K562 (cell line): ENCODE measurements at regions of chr9 and their contacts with region 1.

Region 1: GRCh38 chr9:137672907-137673791 is 54.3 kb downstream of the EHMT1 start:
- DNase-seq: peak; percentile 63 to 74 (median 68)
- ATAC-seq: peak; percentile 14; the same call in 2 of the 3 replicates
- H3K4me3 ChIP-seq: no peak overlapping the region
- H3K27ac ChIP-seq: no peak overlapping the region
- H3K4me1 ChIP-seq: peaks cover 22 to 58% of the 10 kb centered on the region in 2 experiments; a peak in 4 of 5 replicates
- H3K27me3 ChIP-seq: no peaks in the 10 kb centered on the region
- CTCF ChIP-seq: peak; percentile 78 to 90 (median 85)
- EP300 ChIP-seq: no peak
- POLR2A ChIP-seq: no peak
- RAD21 ChIP-seq: peak; percentile 71 to 84

Region 2: DNA sequence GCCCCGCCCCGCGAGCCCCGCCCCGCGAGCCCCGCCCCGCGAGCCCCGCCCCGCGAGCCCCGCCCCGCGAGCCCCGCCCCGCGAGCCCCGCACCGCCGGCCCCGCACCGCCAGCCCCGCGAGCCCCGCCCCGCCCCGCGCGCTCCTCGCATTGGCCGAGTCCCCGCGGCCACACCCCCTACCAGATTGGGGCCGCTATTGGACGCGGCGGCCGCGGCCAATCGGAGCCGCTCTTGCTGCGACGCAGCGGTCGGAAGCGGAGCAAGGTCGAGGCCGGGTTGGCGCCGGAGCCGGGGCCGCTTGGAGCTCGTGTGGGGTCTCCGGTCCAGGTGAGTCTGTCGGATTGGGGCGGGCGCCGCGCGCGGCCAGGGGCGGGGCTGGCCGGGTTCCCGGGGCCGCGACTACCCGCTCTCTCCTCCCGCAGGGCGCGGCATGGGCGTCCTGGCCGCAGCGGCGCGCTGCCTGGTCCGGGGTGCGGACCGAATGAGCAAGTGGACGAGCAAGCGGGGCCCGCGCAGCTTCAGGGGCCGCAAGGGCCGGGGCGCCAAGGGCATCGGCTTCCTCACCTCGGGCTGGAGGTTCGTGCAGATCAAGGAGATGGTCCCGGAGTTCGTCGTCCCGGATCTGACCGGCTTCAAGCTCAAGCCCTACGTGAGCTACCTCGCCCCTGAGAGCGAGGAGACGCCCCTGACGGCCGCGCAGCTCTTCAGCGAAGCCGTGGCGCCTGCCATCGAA is 121.3 kb before region 1 on chr9 and contains the start of gene MRPL41:
- CTCF ChIA-PET with region 1: no interaction called
- POLR2A ChIA-PET with region 1: no interaction called
- in situ Hi-C with region 1: no loop called
- intact Hi-C with region 1: loop called (anchors 10 kb)
- DNase-seq: peak; percentile 94 to 98 (median 94)
- ATAC-seq: peak; percentile 91
- H3K4me3 ChIP-seq: peak within 1 kb of the TSS; percentile 96
- H3K27ac ChIP-seq: peak within 1 kb of the TSS; percentile 97
- H3K4me1 ChIP-seq: peaks cover 2 to 37% of the 10 kb centered on the region in 2 experiments; a peak in 4 of 5 replicates
- H3K27me3 ChIP-seq: no peaks in the 10 kb centered on the region
- CTCF ChIP-seq: no peak
- EP300 ChIP-seq: peak; percentile 8; the same call in 1 of the 2 replicates
- POLR2A ChIP-seq: peak; percentile 81
- RAD21 ChIP-seq: no peak
- polyA plus RNA-seq, gene MRPL41: 2.6 to 4.1 TPM

Region 3: DNA sequence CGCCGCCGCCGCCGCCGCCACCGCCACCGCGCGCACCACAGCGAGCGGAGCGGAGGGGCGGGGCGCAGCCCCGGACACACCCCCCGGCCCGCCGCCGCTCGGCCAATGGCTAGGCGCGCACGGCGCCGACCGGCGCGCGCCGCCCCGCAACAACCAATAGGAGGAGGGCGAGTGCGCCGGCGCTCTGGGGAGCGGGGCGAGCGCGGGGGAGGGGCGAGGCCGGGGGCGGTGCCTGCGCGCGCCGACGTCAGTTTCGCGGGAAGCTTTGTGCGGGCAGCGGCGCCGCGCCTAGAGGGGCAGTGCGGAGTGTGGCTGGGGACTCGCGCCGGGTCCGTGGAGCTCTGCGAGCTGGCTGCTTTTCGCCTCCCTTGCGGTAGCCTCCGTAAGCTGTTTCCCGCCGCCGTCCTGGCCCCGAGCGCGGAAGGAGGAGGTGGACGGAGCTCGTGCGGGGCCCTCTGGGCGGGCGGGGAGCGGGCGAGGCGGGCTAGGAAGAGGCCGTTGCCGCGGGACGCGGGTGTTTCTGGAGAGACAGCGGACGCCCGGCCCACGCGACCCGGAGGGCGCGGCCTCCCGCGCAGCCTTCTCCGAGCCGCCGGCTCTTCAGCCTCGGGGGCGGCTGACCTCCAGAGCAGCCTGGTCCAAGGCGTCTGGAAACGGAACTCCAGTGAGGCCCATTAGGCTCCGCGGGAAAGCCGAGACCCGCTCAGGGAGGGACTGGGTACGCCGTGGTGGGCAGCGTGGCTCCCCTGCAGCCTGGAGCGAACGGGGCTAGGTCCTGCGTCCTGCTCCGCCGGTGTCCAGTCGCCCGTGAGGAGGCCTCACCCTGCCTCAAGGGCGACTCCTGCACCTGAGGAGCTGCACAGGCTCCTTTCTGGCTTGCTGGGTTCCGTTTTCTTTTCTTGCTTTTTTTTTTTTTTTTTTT is 82.4 kb before region 1 on chr9 and contains the start of gene ZMYND19:
- CTCF ChIA-PET with region 1: no interaction called
- POLR2A ChIA-PET with region 1: no interaction called
- in situ Hi-C with region 1: no loop called
- intact Hi-C with region 1: loop called (anchors 10 kb)
- DNase-seq: peak; percentile 92 to 100 (median 100)
- ATAC-seq: peak; percentile 96
- H3K4me3 ChIP-seq: peak within 1 kb of the TSS; percentile 92
- H3K27ac ChIP-seq: peak within 1 kb of the TSS; percentile 76
- H3K4me1 ChIP-seq: peaks cover 27 to 54% of the 10 kb centered on the region in 2 experiments; a peak in 4 of 5 replicates
- H3K27me3 ChIP-seq: no peaks in the 10 kb centered on the region
- CTCF ChIP-seq: peak in 2 of 3 experiments; percentile 15 to 31; a peak in 4 of 6 replicates
- EP300 ChIP-seq: no peak
- POLR2A ChIP-seq: peak; percentile 63
- RAD21 ChIP-seq: no peak
- polyA plus RNA-seq, gene ZMYND19: 1.0 to 2.4 TPM

Region 4: GRCh38 chr9:137694967-137695879 is 22.1 kb after region 1 on chr9:
- CTCF ChIA-PET with region 1: interaction called, 7 read pairs
- POLR2A ChIA-PET with region 1: interaction called, 8 read pairs
- in situ Hi-C with region 1: no loop called
- intact Hi-C with region 1: loop called (anchors 1 kb)
- DNase-seq: peak; percentile 68 to 77 (median 76)
- ATAC-seq: peak; percentile 99
- H3K4me3 ChIP-seq: no peak overlapping the region
- H3K27ac ChIP-seq: no peak overlapping the region
- H3K4me1 ChIP-seq: peaks cover 0 to 26% of the 10 kb centered on the region in 2 experiments; a peak in 3 of 5 replicates
- H3K27me3 ChIP-seq: no peaks in the 10 kb centered on the region
- CTCF ChIP-seq: peak; percentile 89 to 92 (median 90)
- EP300 ChIP-seq: no peak
- POLR2A ChIP-seq: no peak
- RAD21 ChIP-seq: peak in 1 of 2 experiments; percentile 69; a peak in 2 of 4 replicates

Region 5: DNA sequence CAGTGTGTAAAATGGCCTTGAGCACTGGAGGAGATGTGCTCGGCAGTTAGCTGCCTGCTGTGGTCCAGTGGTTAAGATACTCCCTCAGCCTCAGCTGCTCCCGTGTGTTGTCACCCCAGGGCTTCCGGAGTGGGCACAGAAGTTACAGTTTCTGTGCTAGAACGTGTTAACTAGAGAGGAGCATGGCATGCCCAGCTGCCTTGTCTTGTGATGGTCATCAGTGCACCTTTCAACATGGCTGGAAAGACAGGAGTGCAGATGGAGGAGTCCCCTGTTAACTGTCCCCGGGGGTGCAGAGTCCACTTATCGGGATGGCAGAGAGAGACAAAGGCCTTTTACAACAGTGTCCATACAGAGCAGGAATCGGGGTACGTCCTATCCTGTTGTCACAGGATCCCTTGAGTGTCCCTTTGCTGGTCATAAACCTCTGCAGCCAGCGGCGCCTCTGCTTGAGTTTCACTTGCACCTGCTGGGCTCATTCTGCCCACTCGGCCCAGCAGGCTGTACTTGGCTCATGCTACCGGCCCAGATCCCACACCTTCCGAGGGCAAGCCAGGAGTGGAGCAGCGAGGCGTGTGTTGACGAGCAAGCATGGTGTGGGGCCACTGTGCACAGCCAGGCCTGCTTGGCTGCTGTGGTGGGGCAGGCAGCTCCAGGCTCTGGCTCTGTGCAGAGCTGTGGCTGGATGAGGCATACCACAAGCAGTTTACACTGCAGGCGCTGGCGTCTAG is 58.2 kb after region 1 on chr9:
- CTCF ChIA-PET with region 1: no interaction called
- POLR2A ChIA-PET with region 1: no interaction called
- in situ Hi-C with region 1: no loop called
- intact Hi-C with region 1: no loop called
- DNase-seq: no peak
- ATAC-seq: no peak
- H3K4me3 ChIP-seq: no peak overlapping the region
- H3K27ac ChIP-seq: no peak overlapping the region
- H3K4me1 ChIP-seq: peaks cover 0 to 6% of the 10 kb centered on the region in 2 experiments; a peak in 1 of 5 replicates
- H3K27me3 ChIP-seq: no peaks in the 10 kb centered on the region
- CTCF ChIP-seq: no peak
- EP300 ChIP-seq: no peak
- POLR2A ChIP-seq: no peak
- RAD21 ChIP-seq: no peak

Region 6: DNA sequence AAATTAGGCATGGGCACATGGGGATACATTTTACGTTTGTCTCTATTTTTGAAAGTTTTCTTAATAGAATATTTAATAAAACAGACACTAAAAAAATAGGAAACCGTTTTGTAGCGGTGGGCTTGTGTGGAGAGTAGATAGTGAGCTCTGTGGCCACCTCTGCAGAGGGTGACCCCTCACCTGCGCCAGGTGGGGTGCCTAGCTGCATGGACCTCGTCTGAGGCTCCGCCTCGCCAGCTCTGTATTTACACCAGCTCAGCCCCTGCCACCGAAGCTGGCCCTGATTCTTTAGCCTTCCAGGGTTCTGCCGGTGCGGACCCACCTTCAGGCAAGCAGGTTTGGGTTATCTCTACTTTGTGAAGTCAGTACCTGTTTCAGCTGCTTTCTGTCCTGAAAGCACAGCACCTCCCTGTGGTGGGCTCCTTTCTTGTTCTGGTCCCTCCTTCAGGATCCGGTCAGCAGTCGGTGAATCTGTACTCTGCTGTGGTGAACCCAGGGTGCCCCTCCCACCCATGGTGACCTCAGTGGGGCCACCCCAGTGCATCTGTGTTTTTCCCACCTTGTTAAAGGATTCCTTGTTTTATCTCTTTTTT is 99.2 kb after region 1 on chr9:
- CTCF ChIA-PET with region 1: interaction called, 4 read pairs
- POLR2A ChIA-PET with region 1: interaction called, 3 read pairs
- in situ Hi-C with region 1: no loop called
- intact Hi-C with region 1: loop called (anchors 5 kb)
- DNase-seq: peak in 3 of 4 experiments; percentile 11 to 33 (median 28)
- ATAC-seq: peak; percentile 72
- H3K4me3 ChIP-seq: no peak overlapping the region
- H3K27ac ChIP-seq: no peak overlapping the region
- H3K4me1 ChIP-seq: no peaks in the 10 kb centered on the region; a peak in 1 of 5 replicates
- H3K27me3 ChIP-seq: no peaks in the 10 kb centered on the region
- CTCF ChIP-seq: peak; percentile 26 to 31 (median 27); a peak in 3 of 6 replicates
- EP300 ChIP-seq: no peak
- POLR2A ChIP-seq: no peak
- RAD21 ChIP-seq: no peak

Region 7: DNA sequence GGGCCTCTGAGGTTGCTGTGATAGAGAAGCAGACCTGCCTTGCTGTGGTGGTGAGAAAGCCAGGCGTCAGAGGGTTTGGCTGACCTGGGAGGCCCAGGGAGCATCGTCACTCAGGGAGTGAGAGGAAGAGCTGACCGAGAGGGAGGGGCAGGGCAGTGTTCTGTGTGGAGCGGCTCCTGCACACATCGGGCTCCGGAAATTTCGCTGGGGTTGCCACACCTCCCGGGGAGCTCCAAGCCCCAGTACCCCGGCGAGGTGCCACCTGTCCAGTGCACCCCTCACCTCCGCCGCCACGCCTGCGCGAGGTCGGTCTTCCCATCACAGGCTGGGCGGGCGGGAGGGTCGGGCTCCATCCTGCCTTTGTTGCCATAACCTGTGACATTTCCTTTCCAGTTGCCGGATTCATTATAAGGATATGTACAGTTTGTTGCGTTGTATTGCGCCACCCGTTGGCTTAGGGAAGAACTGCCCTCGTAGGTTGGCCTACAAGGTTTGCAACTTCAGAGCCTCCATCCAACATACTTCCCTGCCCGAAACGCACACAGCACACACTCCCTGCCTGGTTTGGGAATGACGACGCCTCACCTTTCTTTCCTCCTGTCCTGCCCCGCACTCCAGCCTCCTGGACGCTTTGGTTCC is 427.7 kb after region 1 on chr9:
- CTCF ChIA-PET with region 1: no interaction called
- POLR2A ChIA-PET with region 1: no interaction called
- in situ Hi-C with region 1: no loop called
- intact Hi-C with region 1: loop called (anchors 5 kb)
- DNase-seq: peak in 2 of 4 experiments; percentile 20 to 36
- ATAC-seq: peak; percentile 78
- H3K4me3 ChIP-seq: no peak overlapping the region
- H3K27ac ChIP-seq: no peak overlapping the region
- H3K4me1 ChIP-seq: peaks cover 0 to 4% of the 10 kb centered on the region in 2 experiments; a peak in 2 of 5 replicates
- H3K27me3 ChIP-seq: peaks cover 0 to 65% of the 10 kb centered on the region in 2 experiments; a peak in 3 of 5 replicates
- CTCF ChIP-seq: peak; percentile 60 to 62 (median 61)
- EP300 ChIP-seq: no peak
- POLR2A ChIP-seq: no peak
- RAD21 ChIP-seq: peak in 1 of 2 experiments; percentile 41; a peak in 2 of 4 replicates